HCT116 (cell line): ENCODE measurements at regions of chr2 and their contacts with region 1.

Region 1: GRCh38 chr2:207166039-207166348 is 246 bp upstream of the KLF7 start:
- DNase-seq: peak; percentile 94
- ATAC-seq: peak; percentile 96
- H3K4me3 ChIP-seq: peak overlapping the region; percentile 49 to 67
- H3K27ac ChIP-seq: peak overlapping the region; percentile 98
- H3K4me1 ChIP-seq: peaks cover 24 to 54% of the 10 kb centered on the region in 2 experiments
- H3K27me3 ChIP-seq: no peaks in the 10 kb centered on the region
- CTCF ChIP-seq: no peak
- POLR2A ChIP-seq: no peak
- RAD21 ChIP-seq: no peak

Region 2: DNA sequence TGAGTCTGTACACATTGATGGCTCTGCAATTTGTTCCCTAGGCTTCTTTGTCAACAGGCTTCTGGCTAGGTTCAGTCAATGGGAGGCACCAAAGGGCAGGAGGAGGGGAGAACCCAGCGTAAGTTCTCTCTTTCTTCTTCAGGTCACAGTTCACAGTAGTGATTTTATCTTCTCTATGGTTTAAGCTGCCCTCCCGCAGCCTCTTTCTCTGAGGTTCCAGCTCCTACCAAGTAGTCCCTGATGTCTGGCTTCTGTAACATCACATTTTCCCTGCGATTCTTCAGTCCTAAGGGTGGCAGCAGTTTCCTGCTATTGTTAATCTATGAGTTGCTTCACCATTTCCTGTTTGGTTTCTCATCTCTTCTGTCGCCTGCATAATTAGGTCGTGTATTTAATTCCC is 119.3 kb before region 1 on chr2:
- CTCF ChIA-PET with region 1: no interaction called
- POLR2A ChIA-PET with region 1: no interaction called
- RAD21 ChIA-PET with region 1: no interaction called
- intact Hi-C with region 1: no loop called
- DNase-seq: no peak
- ATAC-seq: no peak
- H3K4me3 ChIP-seq: no peak overlapping the region
- H3K27ac ChIP-seq: no peak overlapping the region
- H3K4me1 ChIP-seq: no peaks in the 10 kb centered on the region
- H3K27me3 ChIP-seq: no peaks in the 10 kb centered on the region
- CTCF ChIP-seq: 0 out of 6 replicates have a peak, but pooled peaks of 1 of the 3 experiments have one; percentile 6
- POLR2A ChIP-seq: no peak
- RAD21 ChIP-seq: peak; percentile 41

Region 3: DNA sequence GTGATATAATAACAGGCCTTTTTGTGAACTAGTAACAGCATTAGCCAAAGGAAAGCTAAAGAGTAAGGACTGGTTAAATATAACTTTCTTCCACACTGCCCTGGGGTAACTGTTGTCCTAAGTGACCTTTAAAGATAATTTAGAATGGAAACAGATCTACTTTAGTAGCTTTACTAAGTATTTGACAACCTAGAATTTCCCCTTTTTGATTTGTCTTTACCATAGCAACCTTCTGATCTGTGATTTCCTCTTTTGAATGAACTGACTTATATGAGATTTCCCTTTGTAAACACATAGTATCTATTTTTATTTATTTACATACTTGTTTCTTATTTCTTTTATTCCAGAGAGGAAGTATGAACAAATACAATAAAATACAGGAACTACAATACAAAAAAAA is 10.3 kb after region 1 on chr2:
- CTCF ChIA-PET with region 1: no interaction called
- POLR2A ChIA-PET with region 1: interaction called, 16 read pairs
- RAD21 ChIA-PET with region 1: no interaction called
- intact Hi-C with region 1: no loop called
- DNase-seq: no peak
- ATAC-seq: no peak
- H3K4me3 ChIP-seq: no peak overlapping the region
- H3K27ac ChIP-seq: no peak overlapping the region
- H3K4me1 ChIP-seq: peaks cover 4 to 11% of the 10 kb centered on the region in 2 experiments; a peak in 3 of 4 replicates
- H3K27me3 ChIP-seq: no peaks in the 10 kb centered on the region
- CTCF ChIP-seq: no peak
- POLR2A ChIP-seq: no peak
- RAD21 ChIP-seq: no peak

Region 4: GRCh38 chr2:207219676-207220501 is 53.9 kb after region 1 on chr2:
- CTCF ChIA-PET with region 1: no interaction called
- POLR2A ChIA-PET with region 1: no interaction called
- RAD21 ChIA-PET with region 1: no interaction called
- intact Hi-C with region 1: no loop called
- DNase-seq: no peak
- ATAC-seq: no peak
- H3K4me3 ChIP-seq: no peak overlapping the region
- H3K27ac ChIP-seq: no peak overlapping the region
- H3K4me1 ChIP-seq: no peaks in the 10 kb centered on the region
- H3K27me3 ChIP-seq: 0 out of 2 replicates have a peak, but pooled peaks cover 5% of the 10 kb centered on the region
- CTCF ChIP-seq: no peak
- POLR2A ChIP-seq: no peak
- RAD21 ChIP-seq: no peak

Region 5: GRCh38 chr2:207304761-207305160 is 138.8 kb after region 1 on chr2:
- CTCF ChIA-PET with region 1: no interaction called
- POLR2A ChIA-PET with region 1: no interaction called
- RAD21 ChIA-PET with region 1: no interaction called
- intact Hi-C with region 1: no loop called
- DNase-seq: no peak
- ATAC-seq: no peak
- H3K4me3 ChIP-seq: no peak overlapping the region
- H3K27ac ChIP-seq: no peak overlapping the region
- H3K4me1 ChIP-seq: no peaks in the 10 kb centered on the region
- H3K27me3 ChIP-seq: no peaks in the 10 kb centered on the region
- CTCF ChIP-seq: no peak
- POLR2A ChIP-seq: no peak
- RAD21 ChIP-seq: no peak

Region 6: DNA sequence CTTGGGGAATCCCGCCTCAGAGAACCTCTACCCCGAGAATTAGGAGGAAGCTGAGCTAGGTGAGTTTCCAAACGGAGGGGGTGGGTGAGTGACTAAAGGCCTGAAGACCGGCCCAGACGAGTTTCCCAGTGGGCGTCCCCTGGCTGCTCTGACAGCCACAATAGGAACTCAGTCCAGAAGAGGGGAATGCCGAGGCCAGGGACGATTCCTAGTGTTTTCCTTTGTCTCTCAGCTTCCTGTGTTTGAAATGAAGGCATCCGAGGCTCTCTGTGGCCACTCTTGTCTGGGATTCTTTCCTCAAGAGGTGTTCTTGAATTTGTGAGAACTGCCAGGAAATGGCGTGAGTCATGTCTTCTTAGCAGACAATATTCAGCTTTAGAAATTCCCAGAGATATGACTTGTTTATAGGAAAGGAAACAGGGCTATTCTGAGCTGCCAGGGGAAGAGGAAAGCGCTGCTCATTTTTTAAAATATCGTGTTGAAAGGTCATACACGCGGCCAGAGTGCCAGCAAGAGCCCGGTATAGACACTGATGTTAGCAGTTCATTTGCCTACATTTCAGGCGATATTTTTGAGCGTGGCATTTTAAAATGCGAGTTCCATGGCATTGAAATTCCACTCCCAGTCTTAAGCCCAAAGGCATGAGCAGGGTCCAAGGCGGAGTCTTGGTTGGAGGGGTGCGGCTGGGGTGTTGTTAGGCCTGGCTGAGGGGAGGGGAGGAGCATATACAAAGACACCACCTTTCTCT is 168.8 kb after region 1 on chr2:
- CTCF ChIA-PET with region 1: interaction called, 3 read pairs
- POLR2A ChIA-PET with region 1: interaction called, 4 read pairs
- RAD21 ChIA-PET with region 1: no interaction called
- intact Hi-C with region 1: loop called (anchors 1 kb)
- DNase-seq: peak; percentile 62
- ATAC-seq: peak; percentile 48
- H3K4me3 ChIP-seq: peak overlapping the region in 1 of 2 experiments; percentile 36; a peak in 2 of 4 replicates
- H3K27ac ChIP-seq: peak overlapping the region; percentile 25
- H3K4me1 ChIP-seq: peaks cover 26 to 59% of the 10 kb centered on the region in 2 experiments
- H3K27me3 ChIP-seq: no peaks in the 10 kb centered on the region
- CTCF ChIP-seq: no peak
- POLR2A ChIP-seq: no peak
- RAD21 ChIP-seq: peak; percentile 17; the same call in 1 of the 2 replicates

Region 7: GRCh38 chr2:207394812-207395534 is 229.0 kb after region 1 on chr2:
- CTCF ChIA-PET with region 1: no interaction called
- POLR2A ChIA-PET with region 1: no interaction called
- RAD21 ChIA-PET with region 1: no interaction called
- intact Hi-C with region 1: loop called (anchors 1 kb)
- DNase-seq: peak; percentile 97
- ATAC-seq: peak; percentile 83
- H3K4me3 ChIP-seq: peak overlapping the region in 1 of 2 experiments; percentile 1; a peak in 2 of 4 replicates
- H3K27ac ChIP-seq: peak overlapping the region; percentile 9; the same call in 1 of the 2 replicates
- H3K4me1 ChIP-seq: peaks cover 12 to 26% of the 10 kb centered on the region in 2 experiments
- H3K27me3 ChIP-seq: no peaks in the 10 kb centered on the region
- CTCF ChIP-seq: no peak
- POLR2A ChIP-seq: no peak
- RAD21 ChIP-seq: peak; percentile 35; the same call in 1 of the 2 replicates

Region 8: GRCh38 chr2:207405150-207405549 is 239.2 kb after region 1 on chr2:
- CTCF ChIA-PET with region 1: no interaction called
- POLR2A ChIA-PET with region 1: no interaction called
- RAD21 ChIA-PET with region 1: no interaction called
- intact Hi-C with region 1: no loop called
- DNase-seq: no peak
- ATAC-seq: no peak
- H3K4me3 ChIP-seq: no peak overlapping the region
- H3K27ac ChIP-seq: no peak overlapping the region
- H3K4me1 ChIP-seq: no peaks in the 10 kb centered on the region
- H3K27me3 ChIP-seq: no peaks in the 10 kb centered on the region
- CTCF ChIP-seq: no peak
- POLR2A ChIP-seq: no peak
- RAD21 ChIP-seq: no peak